ENCODE measurements at regions of chr15 and their contacts with region 1.

Region 1: GRCh38 chr15:90071208-90071807 is 31.0 kb downstream of the IDH2 start:
- DNase-seq: peak; percentile 88
- H3K4me3 Mint-ChIP-seq: no peak overlapping the region
- H3K27ac Mint-ChIP-seq: peak overlapping the region; percentile 49
- H3K4me1 Mint-ChIP-seq: peaks cover 8% of the 10 kb centered on the region
- H3K27me3 Mint-ChIP-seq: no peaks in the 10 kb centered on the region

Region 2: GRCh38 chr15:89893696-89894455 is 177.4 kb before region 1 on chr15 and contains the start of gene AP3S2:
- CTCF ChIA-PET with region 1: interaction called, 52 read pairs
- DNase-seq: peak; percentile 90
- H3K4me3 Mint-ChIP-seq: peak within 1 kb of the TSS; percentile 93
- H3K27ac Mint-ChIP-seq: peak within 1 kb of the TSS; percentile 87
- H3K4me1 Mint-ChIP-seq: peaks cover 45% of the 10 kb centered on the region
- H3K27me3 Mint-ChIP-seq: peaks cover 8% of the 10 kb centered on the region

Region 3: GRCh38 chr15:90031231-90031791 is 40.0 kb before region 1 on chr15:
- CTCF ChIA-PET with region 1: interaction called, 17 read pairs
- DNase-seq: peak; percentile 36
- H3K4me3 Mint-ChIP-seq: no peak overlapping the region
- H3K27ac Mint-ChIP-seq: peak overlapping the region; percentile 84
- H3K4me1 Mint-ChIP-seq: peaks cover 62% of the 10 kb centered on the region
- H3K27me3 Mint-ChIP-seq: no peaks in the 10 kb centered on the region

Region 4: GRCh38 chr15:90053685-90054466 is 17.4 kb before region 1 on chr15:
- CTCF ChIA-PET with region 1: interaction called, 10 read pairs
- DNase-seq: no peak
- H3K4me3 Mint-ChIP-seq: no peak overlapping the region
- H3K27ac Mint-ChIP-seq: no peak overlapping the region
- H3K4me1 Mint-ChIP-seq: peaks cover 16% of the 10 kb centered on the region
- H3K27me3 Mint-ChIP-seq: no peaks in the 10 kb centered on the region

Region 5: GRCh38 chr15:90086868-90087268 is 15.6 kb after region 1 on chr15:
- CTCF ChIA-PET with region 1: interaction called, 18 read pairs
- DNase-seq: peak; percentile 74
- H3K4me3 Mint-ChIP-seq: no peak overlapping the region
- H3K27ac Mint-ChIP-seq: no peak overlapping the region
- H3K4me1 Mint-ChIP-seq: peaks cover 14% of the 10 kb centered on the region
- H3K27me3 Mint-ChIP-seq: no peaks in the 10 kb centered on the region